ENCODE measurements at regions of chr12 and their contacts with region 1.

Region 1: GRCh38 chr12:109597795-109598427 is 24.3 kb downstream of the MVK start:
- DNase-seq: peak; percentile 87 to 93
- ATAC-seq: peak; percentile 76 to 90 (median 82)
- H3K4me3 ChIP-seq: no peak overlapping the region
- H3K27ac ChIP-seq: no peak overlapping the region
- H3K4me1 ChIP-seq: peaks cover 34% of the 10 kb centered on the region
- H3K27me3 ChIP-seq: no peaks in the 10 kb centered on the region
- CTCF ChIP-seq: peak; percentile 95

Region 2: GRCh38 chr12:109518820-109519665 is 78.9 kb before region 1 on chr12:
- intact Hi-C with region 1: loop called in 1 of 2 experiments (anchors 5 kb)
- DNase-seq: peak; percentile 50 to 74
- ATAC-seq: peak; percentile 70 to 86 (median 79)
- H3K4me3 ChIP-seq: no peak overlapping the region
- H3K27ac ChIP-seq: peak overlapping the region; percentile 69
- H3K4me1 ChIP-seq: peaks cover 5% of the 10 kb centered on the region
- H3K27me3 ChIP-seq: no peaks in the 10 kb centered on the region
- CTCF ChIP-seq: peak; percentile 81

Region 3: DNA sequence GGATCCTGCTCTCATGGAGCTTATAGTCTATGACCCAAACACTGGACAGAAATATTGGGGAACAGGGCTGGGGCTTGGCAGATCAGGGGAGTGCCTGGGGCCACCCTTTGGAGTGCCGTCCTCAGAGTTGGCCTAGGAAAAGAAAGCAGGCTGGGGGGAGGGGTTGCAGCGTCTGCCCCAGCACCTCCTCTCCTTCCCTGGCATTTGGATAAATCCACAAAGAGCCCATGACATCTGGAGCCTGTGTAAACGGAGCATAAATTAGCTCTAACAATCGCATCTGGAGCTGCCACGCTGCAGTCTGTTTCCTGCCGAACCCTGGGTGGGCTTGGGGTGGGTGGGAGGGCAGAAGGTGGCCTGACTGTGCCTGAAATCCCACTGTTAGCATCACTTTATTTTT is 39.4 kb after region 1 on chr12:
- intact Hi-C with region 1: no loop called
- DNase-seq: no peak
- ATAC-seq: no peak
- H3K4me3 ChIP-seq: no peak overlapping the region
- H3K27ac ChIP-seq: no peak overlapping the region
- H3K4me1 ChIP-seq: no peaks in the 10 kb centered on the region
- H3K27me3 ChIP-seq: peaks cover 0 to 2% (median 0%) of the 10 kb centered on the region in 3 donors
- CTCF ChIP-seq: no peak

Region 4: DNA sequence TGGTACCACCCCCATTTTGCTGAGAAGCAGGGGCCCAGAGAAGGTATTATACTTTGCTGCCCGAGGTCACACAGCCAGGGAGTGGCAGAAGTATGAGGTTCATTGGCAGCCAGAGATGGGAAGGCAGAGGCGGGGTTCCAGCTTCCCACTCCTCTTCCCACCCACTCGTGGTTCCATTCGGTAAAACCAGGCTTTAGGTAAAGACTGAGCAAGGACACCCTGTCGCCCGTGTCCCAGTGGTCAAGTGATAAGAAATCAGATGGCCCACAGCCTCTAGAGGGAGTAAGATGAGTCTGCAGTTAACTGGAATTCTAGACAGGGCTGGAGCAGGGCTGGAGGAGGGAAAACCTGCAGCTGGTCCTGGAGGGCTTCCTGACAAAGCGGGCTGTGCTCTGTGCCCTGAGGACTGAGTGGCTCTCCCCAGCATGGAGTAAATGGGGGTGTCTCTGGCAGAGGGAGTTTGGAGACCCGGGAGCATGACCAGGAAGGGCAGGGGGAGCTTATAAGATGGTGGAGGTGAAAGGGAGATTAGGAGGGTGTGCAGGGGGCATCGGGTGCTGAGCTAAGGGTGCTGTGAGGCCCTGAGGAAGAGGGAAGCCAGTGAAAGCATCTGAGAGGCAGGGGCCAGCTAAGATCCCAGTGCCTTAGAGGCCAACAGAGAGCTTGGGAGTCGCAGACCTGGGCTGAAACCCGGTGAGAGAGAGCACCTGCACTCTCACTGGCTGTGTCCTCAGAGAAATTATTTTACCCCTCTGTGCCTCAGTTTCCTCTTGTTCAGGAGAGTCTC is 121.5 kb after region 1 on chr12:
- intact Hi-C with region 1: loop called (anchors 5 kb)
- DNase-seq: no peak
- ATAC-seq: no peak
- H3K4me3 ChIP-seq: no peak overlapping the region
- H3K27ac ChIP-seq: peak overlapping the region; percentile 82
- H3K4me1 ChIP-seq: peaks cover 77% of the 10 kb centered on the region
- H3K27me3 ChIP-seq: no peaks in the 10 kb centered on the region
- CTCF ChIP-seq: peak; percentile 26